Motor neuron (in vitro differentiated cells): ENCODE measurements at regions of chr18 and their contacts with region 1.

Region 1: GRCh38 chr18:46281185-46282176 is 177.3 kb downstream of the HAUS1 start:
- ATAC-seq: peak; percentile 55 to 90 (median 70)
- H3K4me3 ChIP-seq: no peak overlapping the region
- H3K27ac ChIP-seq: no peak overlapping the region
- H3K4me1 ChIP-seq: peaks cover 23 to 33% of the 10 kb centered on the region in 2 donors

Region 2: GRCh38 chr18:45930963-45931362 is 350.5 kb before region 1 on chr18:
- in situ Hi-C with region 1: no loop called
- ATAC-seq: peak in 1 of 8 experiments; percentile 38
- H3K4me3 ChIP-seq: no peak overlapping the region
- H3K27ac ChIP-seq: no peak overlapping the region
- H3K4me1 ChIP-seq: no peaks in the 10 kb centered on the region

Region 3: DNA sequence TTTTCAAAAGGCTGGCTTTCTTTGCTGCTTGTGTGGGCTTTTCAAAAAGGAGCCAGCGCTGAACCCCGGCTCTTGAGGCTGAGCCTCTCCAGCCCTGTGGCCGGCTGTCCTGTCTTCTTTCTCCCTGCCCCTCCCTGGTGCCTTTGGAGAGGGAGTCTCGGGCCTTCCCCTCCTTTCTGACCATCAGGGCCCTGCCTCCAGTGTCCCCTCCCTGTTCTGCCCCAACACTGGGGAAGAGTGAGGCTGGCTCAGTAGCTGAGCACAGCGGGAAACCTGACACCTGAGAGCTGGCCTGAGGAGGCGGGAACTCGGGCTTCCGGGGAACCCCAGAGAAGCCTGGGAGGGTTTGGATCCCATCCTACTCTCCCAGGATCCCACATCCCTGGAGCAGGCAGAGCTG is 143.4 kb after region 1 on chr18:
- in situ Hi-C with region 1: loop called in 1 of 9 experiments (anchors 25 kb)
- ATAC-seq: peak in 6 of 8 experiments; percentile 32 to 82 (median 74)
- H3K4me3 ChIP-seq: no peak overlapping the region
- H3K27ac ChIP-seq: no peak overlapping the region
- H3K4me1 ChIP-seq: peaks cover 3 to 7% of the 10 kb centered on the region in 2 donors

Region 4: GRCh38 chr18:46481048-46481846 is 199.8 kb after region 1 on chr18:
- in situ Hi-C with region 1: loop called in 2 of 9 experiments (anchors 25 kb)
- ATAC-seq: peak; percentile 43 to 87 (median 76)
- H3K4me3 ChIP-seq: no peak overlapping the region
- H3K27ac ChIP-seq: no peak overlapping the region
- H3K4me1 ChIP-seq: peaks cover 11 to 14% of the 10 kb centered on the region in 2 donors

Region 5: GRCh38 chr18:46632401-46633071 is 351.1 kb after region 1 on chr18:
- in situ Hi-C with region 1: loop called in 1 of 9 experiments (anchors 25 kb)
- ATAC-seq: no peak
- H3K4me3 ChIP-seq: no peak overlapping the region
- H3K27ac ChIP-seq: no peak overlapping the region
- H3K4me1 ChIP-seq: no peaks in the 10 kb centered on the region

Region 6: DNA sequence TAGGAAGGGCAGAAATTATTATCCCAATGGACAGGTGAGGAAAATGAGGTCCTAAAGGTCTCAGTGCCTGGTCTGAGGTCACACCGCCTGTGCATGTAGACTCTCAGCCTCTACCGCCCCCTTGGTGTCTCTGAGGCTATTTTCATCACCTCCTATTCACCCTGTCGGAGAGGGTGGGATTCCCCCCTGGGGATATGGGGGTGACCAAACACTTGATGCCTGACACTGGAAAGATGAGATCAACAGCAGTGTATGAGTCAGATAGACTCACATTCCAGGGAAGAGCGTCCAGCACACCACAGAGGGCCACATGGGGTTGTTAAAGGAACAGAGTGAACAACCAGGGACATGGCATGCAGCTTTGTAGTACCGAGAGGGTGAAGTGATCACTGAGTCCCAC is 1449.3 kb after region 1 on chr18:
- in situ Hi-C with region 1: no loop called
- ATAC-seq: peak in 4 of 8 experiments; percentile 16 to 84 (median 33)
- H3K4me3 ChIP-seq: no peak overlapping the region
- H3K27ac ChIP-seq: no peak overlapping the region
- H3K4me1 ChIP-seq: no peaks in the 10 kb centered on the region